GM10248 (cell line): ENCODE measurements at regions of chr10 and their contacts with region 1.

Region 1: DNA sequence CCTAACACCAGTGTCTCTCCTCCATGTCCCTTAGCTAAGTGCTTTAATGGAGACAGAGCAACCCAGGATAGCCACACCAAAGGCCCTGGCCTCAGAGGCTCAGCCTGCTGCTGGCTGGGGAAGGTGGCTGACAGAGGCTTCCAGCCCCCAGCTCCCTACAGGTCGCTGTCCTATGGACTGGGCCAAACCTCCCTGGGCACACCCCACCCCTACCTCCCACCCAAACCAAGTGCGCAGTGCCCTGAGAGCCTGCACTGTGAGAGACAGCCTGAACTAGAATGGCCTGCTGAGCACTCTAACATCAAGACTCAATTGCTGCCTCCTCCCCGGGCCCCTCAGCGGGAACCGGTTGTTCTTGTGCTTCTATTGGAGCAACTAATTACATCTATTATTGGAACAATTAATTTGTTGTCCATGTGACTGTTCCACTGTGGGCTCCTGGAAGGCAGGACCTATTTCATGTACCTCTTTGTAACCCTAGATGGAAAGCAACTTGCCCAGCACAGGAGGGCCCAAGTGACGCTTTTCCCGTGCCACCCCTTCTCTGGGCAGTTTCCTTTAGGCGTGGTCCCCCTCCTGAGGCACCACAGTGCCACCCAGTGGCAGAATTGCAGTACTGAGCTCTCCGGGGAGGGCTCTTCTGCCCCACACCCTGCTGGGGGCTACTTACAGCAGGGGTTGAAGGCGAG is 63.6 kb upstream of the WAPL start:
- DNase-seq: peak; percentile 88
- CTCF ChIP-seq: peak; percentile 92

Region 2: GRCh38 chr10:86389441-86390193 is 195.6 kb before region 1 on chr10:
- CTCF ChIA-PET with region 1: interaction called, 41 read pairs
- POLR2A ChIA-PET with region 1: no interaction called
- DNase-seq: peak; percentile 85
- CTCF ChIP-seq: peak; percentile 14

Region 3: DNA sequence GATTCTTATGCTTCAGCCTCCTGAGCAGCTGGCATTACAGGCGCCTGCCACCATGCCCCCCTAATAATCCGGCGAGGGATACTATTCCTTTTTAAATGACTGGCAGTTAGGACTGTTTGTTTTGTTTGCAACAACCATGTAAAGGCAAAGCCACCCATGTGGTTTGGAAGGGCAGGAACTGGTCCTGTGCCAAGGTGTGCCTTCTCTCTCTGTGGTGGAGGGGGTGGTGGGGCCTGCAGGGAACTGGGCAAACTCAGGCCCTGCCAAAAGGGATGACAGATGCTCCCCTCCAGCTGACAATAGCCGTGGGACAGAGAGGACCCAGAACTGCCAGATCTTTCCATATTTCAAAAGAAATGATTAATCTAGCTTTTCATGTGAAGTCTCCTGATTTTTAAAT is 40.1 kb before region 1 on chr10:
- CTCF ChIA-PET with region 1: interaction called, 11 read pairs
- POLR2A ChIA-PET with region 1: no interaction called
- DNase-seq: no peak
- CTCF ChIP-seq: no peak

Region 4: DNA sequence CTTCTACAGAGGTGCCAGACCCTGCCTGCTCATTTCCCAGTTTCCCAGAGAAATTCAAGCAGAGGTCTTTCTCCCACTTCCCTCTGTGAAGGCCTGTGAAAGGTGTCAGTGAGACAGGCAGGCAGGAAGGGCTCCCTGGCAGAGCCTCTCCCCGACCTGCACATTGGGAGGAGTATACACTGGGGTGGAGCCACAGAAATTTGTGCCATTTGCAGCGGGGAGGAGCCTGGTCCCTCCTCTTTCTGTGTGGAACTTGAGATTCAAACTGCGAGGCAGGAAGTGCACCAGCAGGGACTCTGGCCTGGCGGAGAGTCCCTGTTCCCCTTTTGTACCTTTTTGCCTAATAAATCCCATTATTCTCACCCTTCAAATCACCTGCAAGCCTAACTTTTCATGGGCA is 14.5 kb after region 1 on chr10:
- CTCF ChIA-PET with region 1: interaction called, 21 read pairs
- POLR2A ChIA-PET with region 1: no interaction called
- DNase-seq: no peak
- CTCF ChIP-seq: no peak

Region 5: DNA sequence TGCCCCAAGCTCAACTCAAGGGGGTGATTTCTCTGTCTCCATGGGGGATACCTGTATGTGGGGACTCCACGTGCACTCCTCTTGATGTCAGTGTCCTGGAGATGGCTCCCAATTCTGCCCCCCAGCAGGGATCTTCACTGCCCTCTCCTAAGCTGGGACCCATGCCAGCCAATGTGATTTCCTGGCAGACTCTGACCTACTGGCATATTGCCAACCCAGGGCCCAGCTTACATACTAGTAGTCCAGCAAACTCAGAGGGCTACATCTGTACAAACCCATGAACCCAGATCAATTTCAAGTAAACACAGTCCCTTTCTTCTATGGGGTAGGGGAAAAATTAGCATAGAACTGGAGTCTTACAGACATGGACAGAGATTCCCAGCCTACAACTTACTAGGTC is 145.0 kb after region 1 on chr10:
- CTCF ChIA-PET with region 1: no interaction called
- POLR2A ChIA-PET with region 1: no interaction called
- DNase-seq: no peak
- CTCF ChIP-seq: no peak